SK-N-SH (cell line): ENCODE measurements at regions of chr14 and their contacts with region 1.

Region 1: DNA sequence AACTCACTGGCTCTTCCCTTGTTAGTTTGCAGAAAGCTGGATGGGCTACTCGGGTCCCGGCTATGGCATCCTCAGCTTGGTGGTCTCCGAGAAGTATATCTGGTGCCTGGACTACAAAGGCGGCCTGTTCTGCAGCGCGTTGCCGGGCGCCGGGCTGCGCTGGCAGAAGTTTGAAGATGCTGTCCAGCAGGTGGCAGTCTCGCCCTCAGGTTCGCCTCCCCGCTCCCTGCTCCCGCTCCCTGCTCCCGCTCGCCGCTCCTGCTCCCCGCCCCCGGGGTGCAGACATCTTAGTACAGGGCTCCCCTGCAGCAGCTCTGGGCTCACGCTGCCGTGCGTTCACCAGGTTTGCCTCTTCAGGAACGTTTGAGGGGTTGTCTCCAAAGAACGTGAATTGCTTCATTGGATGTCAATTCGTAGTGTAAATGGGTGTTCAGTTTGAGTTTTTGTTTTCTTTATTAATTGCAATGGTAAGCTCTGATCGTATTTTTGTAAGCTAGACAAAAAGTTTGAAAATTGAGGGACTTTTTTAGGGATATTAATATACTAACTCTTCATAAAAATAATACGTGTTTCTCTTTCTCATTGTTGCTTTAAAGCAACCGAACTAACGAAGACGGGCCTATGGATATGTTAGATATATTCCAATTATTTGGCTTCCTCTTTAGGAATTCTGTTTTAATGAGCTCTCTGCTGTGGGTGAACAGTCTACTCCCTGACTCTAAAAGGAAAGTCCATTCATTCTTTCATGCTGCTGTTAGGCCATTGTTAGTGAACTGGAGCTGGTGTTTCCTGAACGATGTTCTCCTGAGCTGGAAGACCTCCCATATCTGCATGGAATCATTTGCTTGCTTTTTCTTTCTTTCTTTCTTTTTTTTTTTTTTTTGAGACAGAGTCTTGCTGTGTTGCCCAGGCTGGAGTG is 71.3 kb downstream of the ANKRD9 start:
- DNase-seq: peak; percentile 94
- H3K4me3 ChIP-seq: peak overlapping the region; percentile 5 to 10; a peak in 2 of 4 replicates
- H3K27ac ChIP-seq: no peak overlapping the region
- H3K4me1 ChIP-seq: peaks cover 0 to 2% of the 10 kb centered on the region in 2 experiments; a peak in 1 of 4 replicates
- H3K27me3 ChIP-seq: no peaks in the 10 kb centered on the region
- CTCF ChIP-seq: peak; percentile 75
- EP300 ChIP-seq: no peak
- RAD21 ChIP-seq: peak; percentile 84

Region 2: GRCh38 chr14:102387086-102387485 is 51.2 kb before region 1 on chr14:
- CTCF ChIA-PET with region 1: interaction called, 11 read pairs
- POLR2A ChIA-PET with region 1: no interaction called
- DNase-seq: no peak
- H3K4me3 ChIP-seq: no peak overlapping the region
- H3K27ac ChIP-seq: no peak overlapping the region
- H3K4me1 ChIP-seq: no peaks in the 10 kb centered on the region
- H3K27me3 ChIP-seq: no peaks in the 10 kb centered on the region
- CTCF ChIP-seq: no peak
- EP300 ChIP-seq: no peak
- RAD21 ChIP-seq: no peak

Region 3: GRCh38 chr14:102479777-102480176 is 41.5 kb after region 1 on chr14:
- CTCF ChIA-PET with region 1: interaction called, 16 read pairs
- POLR2A ChIA-PET with region 1: interaction called, 3 read pairs
- DNase-seq: peak; percentile 61
- H3K4me3 ChIP-seq: no peak overlapping the region
- H3K27ac ChIP-seq: no peak overlapping the region; a peak in 1 of 4 replicates
- H3K4me1 ChIP-seq: peaks cover 5 to 14% of the 10 kb centered on the region in 2 experiments; a peak in 2 of 4 replicates
- H3K27me3 ChIP-seq: no peaks in the 10 kb centered on the region
- CTCF ChIP-seq: no peak
- EP300 ChIP-seq: no peak
- RAD21 ChIP-seq: no peak

Region 4: DNA sequence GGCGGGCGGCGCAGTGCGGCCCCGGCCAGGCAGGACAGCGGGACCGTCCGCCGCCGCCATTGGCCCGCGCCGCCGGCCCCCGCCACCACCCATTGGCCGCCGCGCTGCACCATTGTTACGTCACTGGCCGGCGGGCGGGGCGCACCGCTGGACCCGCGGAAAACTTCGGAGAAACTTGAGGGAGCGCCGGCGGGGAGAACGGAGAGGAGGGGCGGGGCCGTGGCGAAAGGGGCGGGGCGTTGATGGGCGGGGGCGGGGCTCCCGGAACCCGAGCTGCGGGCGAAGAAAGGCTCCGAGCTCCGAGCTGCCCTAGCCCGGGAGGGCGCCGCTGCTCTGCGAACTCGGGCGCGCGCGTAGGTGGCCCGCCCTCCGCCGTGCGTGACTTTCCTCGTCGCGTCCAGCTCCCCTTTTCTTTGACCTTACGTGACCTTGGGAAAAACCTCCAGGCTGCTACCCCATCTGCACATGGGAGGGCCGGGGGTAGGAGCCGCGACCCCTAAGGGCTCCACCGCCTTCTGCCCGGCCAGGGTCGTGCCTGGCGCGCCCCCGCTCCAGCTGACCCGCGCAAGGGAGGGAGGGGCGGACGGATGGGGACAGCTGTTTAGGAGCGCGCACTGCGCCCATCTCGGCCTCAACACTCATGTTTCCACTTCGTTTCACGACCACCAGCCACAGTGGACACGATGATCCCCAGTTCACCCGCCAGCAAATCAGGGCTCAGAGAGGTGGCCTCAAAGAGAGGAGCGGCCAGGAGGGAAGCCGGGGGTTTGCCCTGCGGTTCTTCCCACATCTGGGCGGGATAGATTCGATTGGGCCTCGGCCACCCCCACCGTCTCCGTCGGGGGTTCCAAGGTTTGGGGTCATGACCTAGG is 71.7 kb after region 1 on chr14 and contains the start of gene ANKRD9:
- CTCF ChIA-PET with region 1: interaction called, 75 read pairs
- POLR2A ChIA-PET with region 1: no interaction called
- DNase-seq: peak; percentile 99
- H3K4me3 ChIP-seq: peak within 1 kb of the TSS; percentile 64 to 67
- H3K27ac ChIP-seq: peak within 1 kb of the TSS; percentile 42 to 60; a peak in 2 of 4 replicates
- H3K4me1 ChIP-seq: peaks cover 0 to 17% of the 10 kb centered on the region in 2 experiments; a peak in 1 of 4 replicates
- H3K27me3 ChIP-seq: no peaks in the 10 kb centered on the region
- CTCF ChIP-seq: 0 out of 2 replicates have a peak, but pooled peaks have one; percentile 6
- EP300 ChIP-seq: no peak
- RAD21 ChIP-seq: no peak
- polyA plus RNA-seq, gene ANKRD9: 21.3 and 21.4 TPM in 2 replicates

Region 5: GRCh38 chr14:102524466-102525218 is 86.4 kb after region 1 on chr14:
- CTCF ChIA-PET with region 1: interaction called, 36 read pairs
- POLR2A ChIA-PET with region 1: no interaction called
- DNase-seq: peak; percentile 99
- H3K4me3 ChIP-seq: peak overlapping the region; percentile 59 to 69
- H3K27ac ChIP-seq: peak overlapping the region; percentile 63 to 80
- H3K4me1 ChIP-seq: peaks cover 0 to 12% of the 10 kb centered on the region in 2 experiments; a peak in 2 of 4 replicates
- H3K27me3 ChIP-seq: no peaks in the 10 kb centered on the region
- CTCF ChIP-seq: peak; percentile 97
- EP300 ChIP-seq: peak in 1 of 2 experiments; percentile 51; a peak in 2 of 4 replicates
- RAD21 ChIP-seq: peak; percentile 77